ENCODE measurements at regions of chr7 and their contacts with region 1.

Region 1: DNA sequence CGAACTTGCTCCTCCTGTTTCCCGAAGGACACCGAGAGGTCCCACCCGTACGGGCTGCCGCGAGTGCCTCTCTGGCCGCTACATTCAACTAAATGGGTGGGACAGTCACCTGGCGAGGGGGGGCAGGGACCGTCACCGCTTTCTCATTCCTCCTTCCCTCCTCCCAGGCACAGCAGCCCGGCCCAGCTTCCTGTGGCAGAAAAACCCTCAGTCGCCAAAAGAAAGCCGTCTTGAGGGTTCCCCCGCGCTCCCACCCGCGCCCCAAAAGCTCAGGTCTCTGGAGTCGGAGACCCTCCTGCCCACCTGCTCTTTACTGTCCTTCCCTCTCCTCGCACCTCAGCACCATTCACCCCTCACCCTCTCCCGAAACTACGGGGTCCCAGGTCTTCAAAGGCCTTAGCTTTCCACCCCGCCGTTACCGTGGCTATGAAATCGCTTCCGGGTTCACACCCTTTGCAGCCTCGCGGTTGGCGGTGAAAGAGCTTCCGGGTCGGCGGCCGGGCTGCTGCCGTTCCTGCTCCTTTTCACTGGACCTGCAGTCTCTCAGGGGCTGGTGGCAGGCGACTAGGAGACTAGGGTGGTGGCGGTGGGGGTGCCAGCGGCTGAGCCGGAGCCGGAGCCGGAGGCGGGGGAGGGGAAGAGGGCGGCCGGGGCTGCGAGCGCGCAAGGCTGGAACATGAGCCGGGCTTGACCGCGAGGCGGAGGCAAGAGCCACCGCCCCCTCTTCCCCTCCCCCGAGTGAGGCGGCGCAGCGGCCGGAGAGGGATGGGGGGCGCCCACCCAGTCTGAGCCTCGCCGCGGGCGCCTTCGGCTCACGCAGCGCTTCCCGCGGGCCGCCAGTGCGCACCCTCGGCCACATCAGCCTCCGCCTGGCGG is at the starts of genes ANKIB1 and KRIT1:
- DNase-seq: peak; percentile 93 to 96
- ATAC-seq: peak; percentile 94
- H3K4me3 ChIP-seq: peak within 1 kb of the TSS; percentile 87 to 94
- H3K27ac ChIP-seq: peak within 1 kb of the TSS; percentile 46 to 84
- H3K4me1 ChIP-seq: no peaks in the 10 kb centered on the region
- H3K27me3 ChIP-seq: no peaks in the 10 kb centered on the region
- total RNA-seq, gene ANKIB1: 71.0 to 75.1 TPM
- total RNA-seq, gene KRIT1: 36.3 to 65.2 TPM

Region 2: GRCh38 chr7:92279396-92280031 is 33.8 kb after region 1 on chr7:
- intact Hi-C with region 1: loop called in 1 of 2 experiments (anchors 5 kb)
- DNase-seq: no peak
- ATAC-seq: no peak
- H3K4me3 ChIP-seq: no peak overlapping the region
- H3K27ac ChIP-seq: no peak overlapping the region
- H3K4me1 ChIP-seq: peaks cover 3 to 15% of the 10 kb centered on the region in 2 donors
- H3K27me3 ChIP-seq: no peaks in the 10 kb centered on the region

Region 3: DNA sequence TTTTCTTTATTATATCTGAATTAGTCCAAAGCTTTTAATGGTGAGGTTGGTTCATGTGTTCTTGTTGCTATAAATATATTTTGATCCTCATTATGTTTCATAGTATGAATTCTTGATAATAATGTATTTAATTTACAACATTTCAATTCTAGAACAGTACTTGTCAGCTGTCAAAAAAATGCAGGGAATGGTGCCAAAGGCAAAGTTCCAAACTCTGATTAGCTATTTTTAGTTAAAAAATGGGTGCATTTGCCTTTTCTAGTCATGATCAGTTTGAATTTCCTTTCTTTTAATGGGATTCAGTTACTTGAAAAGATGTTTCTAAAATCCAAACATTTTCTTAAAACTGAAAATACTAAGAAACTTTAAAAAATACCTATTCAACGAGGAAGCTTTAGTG is 49.7 kb after region 1 on chr7:
- intact Hi-C with region 1: loop called in 1 of 2 experiments (anchors 5 kb)
- DNase-seq: no peak
- ATAC-seq: no peak
- H3K4me3 ChIP-seq: no peak overlapping the region
- H3K27ac ChIP-seq: no peak overlapping the region
- H3K4me1 ChIP-seq: peaks cover 0 to 2% of the 10 kb centered on the region in 2 donors
- H3K27me3 ChIP-seq: no peaks in the 10 kb centered on the region

Region 4: GRCh38 chr7:92359801-92360200 is 114.1 kb after region 1 on chr7:
- intact Hi-C with region 1: loop called in 1 of 2 experiments (anchors 10 kb)
- DNase-seq: no peak
- ATAC-seq: no peak
- H3K4me3 ChIP-seq: no peak overlapping the region
- H3K27ac ChIP-seq: no peak overlapping the region
- H3K4me1 ChIP-seq: no peaks in the 10 kb centered on the region
- H3K27me3 ChIP-seq: no peaks in the 10 kb centered on the region

Region 5: DNA sequence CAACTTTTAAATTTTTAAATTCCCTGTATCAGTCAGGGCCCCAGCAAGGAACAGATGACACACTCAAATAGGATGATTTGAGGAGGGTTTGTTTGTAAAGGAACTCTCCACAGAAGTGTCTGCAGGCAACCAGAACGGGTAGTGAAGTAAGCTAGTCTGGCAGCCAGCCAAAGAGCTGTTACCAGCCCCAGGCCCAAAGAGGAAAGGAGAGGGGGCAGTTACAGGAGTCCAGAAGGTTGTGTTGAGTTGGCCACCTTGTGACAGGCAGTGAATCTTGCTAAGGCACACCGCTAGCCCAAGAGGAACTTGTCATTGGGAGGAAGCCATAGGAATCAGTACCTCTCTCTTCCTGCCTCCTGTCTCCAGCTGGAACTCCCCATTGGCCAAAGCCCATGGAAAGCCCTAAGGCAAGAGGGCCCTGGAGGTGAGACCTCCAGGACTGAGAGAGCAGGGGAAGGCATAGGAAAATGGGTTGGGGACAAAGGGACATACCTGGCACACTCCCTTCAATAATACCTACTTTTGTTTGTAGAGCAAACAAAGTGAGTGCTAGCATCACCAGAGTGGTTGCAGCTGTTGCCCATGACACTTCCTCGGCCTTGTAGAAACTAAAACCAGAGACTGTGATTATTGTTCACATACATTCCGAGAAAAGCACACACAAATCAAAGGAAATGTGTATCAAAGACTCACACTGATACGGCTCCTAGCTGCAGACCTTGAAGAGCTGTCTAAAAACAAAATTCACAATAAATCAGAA is 176.1 kb after region 1 on chr7:
- intact Hi-C with region 1: loop called in 1 of 2 experiments (anchors 10 kb)
- DNase-seq: no peak
- ATAC-seq: no peak
- H3K4me3 ChIP-seq: no peak overlapping the region
- H3K27ac ChIP-seq: no peak overlapping the region
- H3K4me1 ChIP-seq: no peaks in the 10 kb centered on the region
- H3K27me3 ChIP-seq: no peaks in the 10 kb centered on the region

Region 6: DNA sequence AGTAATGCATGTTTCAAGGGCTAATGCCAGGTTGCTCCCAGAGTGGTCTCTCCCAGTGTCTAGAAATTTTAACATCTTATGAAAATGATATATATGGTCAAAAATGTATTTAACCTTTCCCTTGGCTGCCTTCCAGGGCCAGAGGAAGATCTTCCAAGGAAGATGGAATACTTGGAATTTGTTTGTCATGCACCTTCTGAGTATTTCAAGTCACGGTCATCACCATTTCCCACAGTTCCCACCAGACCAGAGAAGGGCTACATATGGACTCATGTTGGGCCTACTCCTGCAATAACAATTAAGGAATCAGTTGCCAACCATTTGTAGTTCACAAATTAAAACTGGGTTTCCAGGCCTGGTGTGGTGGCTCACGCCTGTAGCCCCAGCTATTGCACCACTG is 210.5 kb after region 1 on chr7:
- intact Hi-C with region 1: loop called in 1 of 2 experiments (anchors 10 kb)
- DNase-seq: no peak
- ATAC-seq: no peak
- H3K4me3 ChIP-seq: no peak overlapping the region
- H3K27ac ChIP-seq: no peak overlapping the region
- H3K4me1 ChIP-seq: no peaks in the 10 kb centered on the region
- H3K27me3 ChIP-seq: no peaks in the 10 kb centered on the region

Measured in aorta (tissue), 5 donors.